ENCODE measurements at regions of chr5 and their contacts with region 1.

Region 1: DNA sequence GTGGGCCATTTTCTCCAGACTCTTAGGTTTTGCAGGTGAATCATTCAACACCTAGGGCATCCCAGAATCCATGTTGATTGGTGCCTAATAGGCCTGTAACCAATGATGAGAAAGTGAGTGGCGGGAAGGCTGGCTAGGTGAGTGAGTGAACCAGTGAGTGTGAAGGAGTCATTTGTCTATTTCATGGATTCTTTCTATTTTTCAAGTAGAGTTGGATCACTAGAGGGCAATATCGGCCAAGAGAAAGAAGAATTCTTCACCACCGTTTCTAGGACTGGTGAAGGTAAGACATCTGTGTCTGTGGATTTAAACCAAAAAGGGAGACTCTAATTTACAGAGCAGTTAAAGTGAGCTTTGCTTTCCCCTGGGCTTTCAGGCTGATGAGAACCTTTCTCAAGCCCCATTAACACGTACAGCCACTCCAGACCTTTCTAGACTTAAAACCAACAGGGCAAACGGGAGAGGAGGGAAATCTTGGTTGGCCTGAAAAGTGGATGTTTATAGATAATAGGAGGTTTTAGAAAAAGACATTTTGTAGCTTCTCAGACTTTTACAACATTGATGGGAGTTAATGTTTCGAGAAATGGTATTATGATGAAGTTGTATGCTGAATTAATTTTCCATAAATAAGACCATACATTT is 114.3 kb upstream of the IL12B start:
- DNase-seq: no peak
- H3K4me3 ChIP-seq: no peak overlapping the region
- H3K27ac ChIP-seq: no peak overlapping the region
- H3K4me1 ChIP-seq: no peaks in the 10 kb centered on the region
- H3K27me3 ChIP-seq: no peaks in the 10 kb centered on the region
- CTCF ChIP-seq: peak in 2 of 3 experiments; percentile 34 to 35
- POLR2A ChIP-seq: no peak

Region 2: GRCh38 chr5:159915904-159916840 is 471.6 kb after region 1 on chr5 and contains the start of gene ADRA1B:
- intact Hi-C with region 1: loop called (anchors 10 kb)
- DNase-seq: peak; percentile 65
- H3K4me3 ChIP-seq: peak within 1 kb of the TSS; percentile 47
- H3K27ac ChIP-seq: no peak within 1 kb of the TSS
- H3K4me1 ChIP-seq: peaks cover 6% of the 10 kb centered on the region
- H3K27me3 ChIP-seq: no peaks in the 10 kb centered on the region
- CTCF ChIP-seq: peak; percentile 22 to 58 (median 46)
- POLR2A ChIP-seq: no peak
- total RNA-seq, gene ADRA1B: 0.93 to 1.2 TPM

Region 3: GRCh38 chr5:159987031-159987674 is 542.6 kb after region 1 on chr5:
- intact Hi-C with region 1: loop called (anchors 10 kb)
- DNase-seq: peak; percentile 85
- H3K4me3 ChIP-seq: peak overlapping the region; percentile 20 to 36
- H3K27ac ChIP-seq: no peak overlapping the region
- H3K4me1 ChIP-seq: no peaks in the 10 kb centered on the region
- H3K27me3 ChIP-seq: no peaks in the 10 kb centered on the region
- CTCF ChIP-seq: peak; percentile 44 to 64 (median 52)
- POLR2A ChIP-seq: no peak

Region 4: GRCh38 chr5:160082614-160083500 is 638.3 kb after region 1 on chr5:
- intact Hi-C with region 1: no loop called
- DNase-seq: no peak
- H3K4me3 ChIP-seq: no peak overlapping the region
- H3K27ac ChIP-seq: no peak overlapping the region
- H3K4me1 ChIP-seq: no peaks in the 10 kb centered on the region
- H3K27me3 ChIP-seq: no peaks in the 10 kb centered on the region
- CTCF ChIP-seq: no peak
- POLR2A ChIP-seq: no peak

Measured in testis (tissue), 5 donors.